Heart left ventricle (tissue), 16 donors: ENCODE measurements at regions of chr10 and their contacts with region 1.

Region 1: GRCh38 chr10:110535958-110536891 is 31.3 kb upstream of the SMC3 start:
- DNase-seq: peak; percentile 36 to 58 (median 44)
- ATAC-seq: peak in 3 of 4 donors; percentile 68 to 83 (median 83)
- H3K4me3 ChIP-seq: no peak overlapping the region
- H3K27ac ChIP-seq: no peak overlapping the region
- H3K4me1 ChIP-seq: peaks cover 0 to 25% (median 0%) of the 10 kb centered on the region in 12 donors
- H3K27me3 ChIP-seq: no peaks in the 10 kb centered on the region
- CTCF ChIP-seq: peak; percentile 14 to 64 (median 54)
- POLR2A ChIP-seq: no peak

Region 2: GRCh38 chr10:110311357-110311949 is 224.8 kb before region 1 on chr10:
- intact Hi-C with region 1: loop called in 4 of 10 experiments (anchors 2 to 5 kb)
- DNase-seq: peak in 3 of 5 donors; percentile 32 to 56 (median 43)
- ATAC-seq: peak in 3 of 4 donors; percentile 64 to 85 (median 79)
- H3K4me3 ChIP-seq: no peak overlapping the region
- H3K27ac ChIP-seq: peak overlapping the region in 1 of 12 donors; percentile 38
- H3K4me1 ChIP-seq: peaks cover 0 to 9% (median 4%) of the 10 kb centered on the region in 12 donors
- H3K27me3 ChIP-seq: peaks cover 0 to 6% (median 0%) of the 10 kb centered on the region in 9 donors
- CTCF ChIP-seq: peak; percentile 39 to 78 (median 68)
- POLR2A ChIP-seq: no peak

Region 3: DNA sequence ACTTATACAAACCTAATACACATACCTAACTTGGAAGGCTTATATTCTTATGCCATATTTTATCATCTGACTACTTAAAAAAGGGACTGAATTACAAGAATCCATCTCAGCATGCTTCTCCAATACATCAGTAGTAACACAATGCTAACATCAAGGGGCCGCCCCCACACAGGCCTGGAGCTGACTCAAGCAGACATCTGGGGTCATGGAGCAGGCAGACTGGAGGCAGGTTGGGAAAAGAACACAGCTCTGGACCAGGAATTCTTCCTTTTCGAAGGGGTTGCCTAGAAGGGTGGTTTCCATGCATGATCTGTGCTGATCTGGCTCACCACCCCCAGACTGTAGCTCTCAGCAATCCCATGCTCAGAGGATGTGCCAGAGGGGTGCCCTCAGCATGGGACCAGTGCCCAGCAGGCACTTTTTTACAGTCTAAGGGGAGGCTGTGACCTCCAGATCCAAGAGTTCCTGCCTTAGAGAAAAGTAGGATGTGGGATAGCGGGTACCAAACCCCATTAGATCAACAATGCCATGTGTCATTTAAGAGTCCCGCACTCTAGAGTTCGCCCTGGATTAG is 64.6 kb before region 1 on chr10:
- intact Hi-C with region 1: no loop called
- DNase-seq: no peak
- ATAC-seq: no peak
- H3K4me3 ChIP-seq: no peak overlapping the region
- H3K27ac ChIP-seq: no peak overlapping the region
- H3K4me1 ChIP-seq: no peaks in the 10 kb centered on the region
- H3K27me3 ChIP-seq: no peaks in the 10 kb centered on the region
- CTCF ChIP-seq: no peak
- POLR2A ChIP-seq: no peak

Region 4: GRCh38 chr10:110600487-110601101 is 64.4 kb after region 1 on chr10:
- intact Hi-C with region 1: no loop called
- DNase-seq: no peak
- ATAC-seq: peak in 1 of 4 donors; percentile 28
- H3K4me3 ChIP-seq: no peak overlapping the region
- H3K27ac ChIP-seq: no peak overlapping the region
- H3K4me1 ChIP-seq: no peaks in the 10 kb centered on the region
- H3K27me3 ChIP-seq: no peaks in the 10 kb centered on the region
- CTCF ChIP-seq: peak; percentile 11 to 55 (median 39)
- POLR2A ChIP-seq: no peak